GM23248 (cell line): ENCODE measurements at regions of chr12 and their contacts with region 1.

Region 1: DNA sequence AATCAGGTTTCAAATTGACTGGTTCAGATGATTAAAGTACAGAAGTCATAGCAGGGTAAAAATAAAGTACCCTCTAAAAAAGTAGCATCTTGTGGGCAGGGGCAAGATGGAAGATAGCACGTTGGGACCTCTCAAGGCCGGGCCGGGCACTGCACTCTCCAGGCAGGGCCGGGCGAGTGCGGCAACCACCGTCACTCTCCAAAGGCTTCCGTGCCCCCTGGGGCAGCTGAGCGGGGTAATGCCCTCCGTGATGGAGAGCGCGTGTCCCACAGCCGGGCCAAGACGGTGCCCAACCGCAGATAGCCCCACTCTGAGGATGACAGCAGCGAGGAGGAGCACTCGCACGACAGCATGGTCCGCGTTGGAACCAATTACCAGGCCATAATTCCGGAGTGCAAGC is 8.6 kb upstream of the PLXNC1 start:
- DNase-seq: no peak
- H3K4me3 ChIP-seq: no peak overlapping the region
- H3K27ac ChIP-seq: no peak overlapping the region
- H3K4me1 ChIP-seq: no peaks in the 10 kb centered on the region
- H3K27me3 ChIP-seq: peaks cover 18% of the 10 kb centered on the region

Region 2: GRCh38 chr12:94532490-94533422 is 392.9 kb after region 1 on chr12:
- in situ Hi-C with region 1: loop called (anchors 5 kb)
- DNase-seq: peak; percentile 79
- H3K4me3 ChIP-seq: no peak overlapping the region
- H3K27ac ChIP-seq: no peak overlapping the region
- H3K4me1 ChIP-seq: no peaks in the 10 kb centered on the region
- H3K27me3 ChIP-seq: peaks cover 26% of the 10 kb centered on the region